Right ventricle myocardium inferior (tissue), 1 donor: ENCODE measurements at regions of chr1 and their contacts with region 1.

Region 1: GRCh38 chr1:226121587-226122400 is 59.3 kb downstream of the H3-3A start:
- DNase-seq: peak; percentile 85
- ATAC-seq: peak; percentile 82

Region 2: GRCh38 chr1:225961659-225962439 is 159.9 kb before region 1 on chr1:
- intact Hi-C with region 1: no loop called
- DNase-seq: no peak
- ATAC-seq: no peak

Region 3: GRCh38 chr1:226332947-226333346 is 211.2 kb after region 1 on chr1:
- intact Hi-C with region 1: loop called (anchors 10 kb)
- DNase-seq: no peak
- ATAC-seq: no peak